GM10248 (cell line): ENCODE measurements at regions of chr2 and their contacts with region 1.

Region 1: GRCh38 chr2:226902041-226902972 is 66.5 kb downstream of the RHBDD1 start:
- DNase-seq: no peak
- CTCF ChIP-seq: no peak

Region 2: DNA sequence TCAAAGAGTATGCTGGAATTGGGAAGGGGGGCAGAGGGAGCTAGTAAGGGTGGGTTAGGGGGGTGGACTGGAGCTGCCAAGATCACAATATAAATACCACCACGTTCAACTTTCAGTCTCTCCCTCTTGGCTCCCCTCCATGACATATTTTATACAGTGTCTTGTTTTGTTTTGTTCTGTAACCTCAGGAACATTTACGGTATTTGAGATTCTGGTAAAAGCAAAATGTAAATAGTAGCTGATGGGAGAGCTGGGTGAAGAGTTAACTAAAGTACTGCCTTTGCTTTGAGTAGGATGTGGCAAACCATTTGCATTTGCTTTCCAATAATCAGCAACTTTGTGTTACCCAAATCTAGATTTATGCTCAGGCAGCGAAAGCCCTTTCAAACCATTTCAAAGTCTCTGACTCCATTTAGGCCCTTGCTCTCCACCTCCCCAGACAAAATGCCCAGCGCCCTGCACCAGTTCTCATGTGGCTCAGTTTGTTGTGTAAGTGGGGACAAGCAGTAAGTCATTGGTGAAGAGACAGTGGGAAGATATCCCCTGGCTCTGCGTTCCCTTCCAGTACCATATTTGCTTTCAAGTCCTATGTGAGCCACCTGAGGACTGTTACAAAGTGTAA is 120.1 kb before region 1 on chr2:
- CTCF ChIA-PET with region 1: no interaction called
- POLR2A ChIA-PET with region 1: no interaction called
- DNase-seq: no peak
- CTCF ChIP-seq: no peak

Region 3: DNA sequence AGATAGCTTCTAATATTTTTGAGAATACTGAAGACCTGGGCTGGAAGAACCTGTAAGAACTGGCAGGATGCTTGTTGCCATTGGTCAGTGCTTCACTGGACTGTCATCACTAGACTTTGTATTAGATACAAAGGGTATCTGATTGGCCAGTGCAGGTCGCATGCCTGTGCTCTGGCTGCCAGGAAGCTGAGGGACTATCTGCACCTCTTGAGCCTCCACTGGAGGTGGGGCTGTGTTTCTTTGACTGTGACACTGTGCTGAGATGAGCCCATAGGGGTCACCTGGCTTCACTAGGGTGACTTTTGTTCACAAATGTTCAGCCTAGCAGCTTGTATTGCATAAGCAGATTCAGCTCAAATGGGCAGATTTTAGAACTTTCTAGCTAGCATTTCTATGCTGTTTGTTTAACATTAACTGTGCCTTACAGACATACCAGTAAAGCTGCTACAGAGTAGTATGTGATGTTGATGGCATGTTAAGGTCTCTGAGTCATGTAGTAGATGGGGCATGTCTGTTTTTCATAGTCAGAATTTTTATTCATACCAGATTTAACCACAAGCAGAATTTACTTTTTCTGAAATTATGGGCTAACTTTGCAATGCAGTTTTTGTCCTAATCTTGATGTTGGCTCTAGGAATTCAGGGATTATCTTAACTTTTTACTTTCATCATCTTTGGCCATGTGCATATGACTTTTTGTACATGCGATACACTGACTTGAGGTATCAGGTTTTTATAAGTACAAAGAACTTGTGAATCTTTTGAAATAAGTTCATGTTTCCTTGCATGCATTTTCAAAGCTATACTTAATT is 10.3 kb before region 1 on chr2:
- CTCF ChIA-PET with region 1: interaction called, 11 read pairs
- POLR2A ChIA-PET with region 1: no interaction called
- DNase-seq: no peak
- CTCF ChIP-seq: no peak

Region 4: DNA sequence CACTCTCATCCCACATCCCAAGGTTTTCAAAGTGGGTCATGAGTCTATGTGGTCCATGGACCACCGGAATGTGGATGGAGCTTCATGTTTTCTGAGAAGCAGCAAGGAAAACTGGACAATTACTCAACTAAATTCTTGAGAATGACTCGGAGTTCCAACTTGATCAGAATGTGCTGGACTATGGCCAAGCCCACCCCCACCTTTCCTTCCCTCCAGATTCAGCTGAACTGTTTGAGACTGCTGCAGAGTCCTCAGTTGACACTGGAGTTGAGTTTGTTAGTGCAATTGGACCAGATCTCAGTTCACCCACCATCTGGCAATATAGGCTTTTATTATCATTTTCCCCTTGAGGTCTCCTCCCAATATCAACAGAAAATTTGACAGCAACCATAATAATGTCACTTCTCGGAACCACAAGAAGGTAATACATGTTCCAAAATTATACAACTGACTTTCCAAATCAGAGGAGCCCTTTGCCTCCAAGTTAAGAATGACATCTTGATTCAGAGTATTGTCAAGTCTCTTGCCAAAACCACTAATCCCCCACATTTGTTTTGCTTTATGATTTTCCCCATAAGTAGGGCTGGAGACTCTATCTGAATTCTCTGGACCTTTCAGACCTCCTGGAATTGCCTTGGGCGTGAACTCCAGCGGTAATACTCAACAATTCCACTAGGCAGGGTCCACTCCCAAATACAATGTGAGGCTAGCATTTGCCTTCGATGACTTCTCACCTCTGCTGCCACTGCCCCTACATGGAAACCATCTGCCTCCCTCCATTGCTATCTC is 252.9 kb after region 1 on chr2:
- CTCF ChIA-PET with region 1: no interaction called
- POLR2A ChIA-PET with region 1: no interaction called
- DNase-seq: no peak
- CTCF ChIP-seq: no peak